Activated T-helper 1 cell treated with anti-CD3 and anti-CD28 coated beads, Interleukin-12 subunit alpha, Interleukin-12 subunit beta, Interleukin-2, Interleukin-4 antibody, amounts not matched to agents 30 ng/mL and 10 ng/mL and 1 ng/mL, durations not matched to agents 14 hours and 24 hours and 36 hours (primary cell): ENCODE measurements at regions of chr9 and their contacts with region 1.

Region 1: DNA sequence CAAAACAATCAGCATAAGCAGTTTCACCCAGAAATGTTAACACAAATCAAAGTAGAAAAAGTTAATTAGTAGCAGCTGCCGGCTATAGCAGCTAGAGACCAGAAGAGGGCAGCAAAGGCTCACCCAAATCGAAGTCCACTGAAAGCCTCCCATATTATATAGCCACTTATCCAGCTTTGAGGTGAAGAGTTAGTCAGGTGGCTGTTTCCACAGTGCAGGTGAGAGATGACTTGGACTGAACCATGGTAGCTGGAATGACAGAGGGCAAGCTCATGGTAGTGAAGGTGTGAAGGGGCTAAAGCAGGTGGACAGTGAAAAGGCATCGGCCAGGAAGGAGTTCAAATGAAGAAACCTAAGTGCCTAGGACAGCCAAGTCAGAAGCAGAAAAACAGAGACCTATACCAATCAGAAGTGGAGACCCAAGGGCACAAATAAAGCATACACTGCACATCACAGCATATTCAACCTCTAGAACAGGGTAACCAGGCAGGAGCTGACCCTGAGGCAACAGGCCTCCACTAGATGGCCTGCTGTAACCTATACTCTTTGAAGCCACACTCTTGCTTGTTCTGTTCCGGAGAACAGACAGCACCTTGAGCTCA is 7.2 kb upstream of the RNF38 start:
- DNase-seq: peak; percentile 49
- H3K4me3 Mint-ChIP-seq: no peak overlapping the region
- H3K27ac Mint-ChIP-seq: peak overlapping the region; percentile 62
- H3K4me1 Mint-ChIP-seq: peaks cover 13% of the 10 kb centered on the region
- H3K27me3 Mint-ChIP-seq: no peaks in the 10 kb centered on the region

Region 2: GRCh38 chr9:36450110-36450732 is 43.0 kb after region 1 on chr9:
- intact Hi-C with region 1: loop called (anchors 1 kb)
- DNase-seq: no peak
- H3K4me3 Mint-ChIP-seq: no peak overlapping the region
- H3K27ac Mint-ChIP-seq: no peak overlapping the region
- H3K4me1 Mint-ChIP-seq: no peaks in the 10 kb centered on the region
- H3K27me3 Mint-ChIP-seq: no peaks in the 10 kb centered on the region

Region 3: DNA sequence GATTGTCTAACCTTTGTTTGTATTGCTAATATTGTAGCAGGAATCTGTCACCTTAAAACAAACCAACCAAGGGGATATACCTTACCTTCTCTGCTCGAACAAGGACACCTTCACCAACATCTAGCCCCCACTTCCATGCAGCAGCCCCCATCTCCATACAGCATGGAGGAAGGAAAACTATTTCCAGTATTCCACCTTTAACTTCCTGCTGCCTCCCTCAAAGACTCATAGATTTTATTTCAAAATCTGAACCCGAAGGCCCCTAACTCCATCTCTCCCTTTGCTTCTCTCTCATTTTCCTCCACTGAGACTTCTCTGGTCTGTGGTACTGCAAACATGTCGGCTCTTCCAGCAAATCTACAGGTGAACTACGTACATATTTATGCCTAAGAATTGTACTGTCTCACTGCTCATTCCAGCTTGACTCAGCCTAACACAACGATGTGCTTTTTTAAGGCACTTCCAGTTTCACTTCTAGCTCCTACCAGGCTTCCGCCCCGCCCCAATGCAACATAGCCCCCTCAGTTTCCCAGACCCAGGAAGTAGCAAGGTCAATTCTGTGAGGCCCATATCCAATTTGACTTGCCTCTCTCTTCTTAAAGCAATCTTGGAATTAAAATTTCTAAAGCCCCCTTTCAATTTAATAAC is 63.5 kb after region 1 on chr9:
- intact Hi-C with region 1: loop called (anchors 5 kb)
- DNase-seq: peak; percentile 54
- H3K4me3 Mint-ChIP-seq: peak overlapping the region; percentile 80
- H3K27ac Mint-ChIP-seq: peak overlapping the region; percentile 86
- H3K4me1 Mint-ChIP-seq: peaks cover 29% of the 10 kb centered on the region
- H3K27me3 Mint-ChIP-seq: no peaks in the 10 kb centered on the region

Region 4: GRCh38 chr9:36560857-36561221 is 153.6 kb after region 1 on chr9:
- intact Hi-C with region 1: loop called (anchors 1 kb)
- DNase-seq: no peak
- H3K4me3 Mint-ChIP-seq: no peak overlapping the region
- H3K27ac Mint-ChIP-seq: no peak overlapping the region
- H3K4me1 Mint-ChIP-seq: no peaks in the 10 kb centered on the region
- H3K27me3 Mint-ChIP-seq: no peaks in the 10 kb centered on the region

Region 5: GRCh38 chr9:36632892-36633291 is 225.7 kb after region 1 on chr9:
- intact Hi-C with region 1: loop called (anchors 1 kb)
- DNase-seq: no peak
- H3K4me3 Mint-ChIP-seq: no peak overlapping the region
- H3K27ac Mint-ChIP-seq: no peak overlapping the region
- H3K4me1 Mint-ChIP-seq: no peaks in the 10 kb centered on the region
- H3K27me3 Mint-ChIP-seq: no peaks in the 10 kb centered on the region

Region 6: DNA sequence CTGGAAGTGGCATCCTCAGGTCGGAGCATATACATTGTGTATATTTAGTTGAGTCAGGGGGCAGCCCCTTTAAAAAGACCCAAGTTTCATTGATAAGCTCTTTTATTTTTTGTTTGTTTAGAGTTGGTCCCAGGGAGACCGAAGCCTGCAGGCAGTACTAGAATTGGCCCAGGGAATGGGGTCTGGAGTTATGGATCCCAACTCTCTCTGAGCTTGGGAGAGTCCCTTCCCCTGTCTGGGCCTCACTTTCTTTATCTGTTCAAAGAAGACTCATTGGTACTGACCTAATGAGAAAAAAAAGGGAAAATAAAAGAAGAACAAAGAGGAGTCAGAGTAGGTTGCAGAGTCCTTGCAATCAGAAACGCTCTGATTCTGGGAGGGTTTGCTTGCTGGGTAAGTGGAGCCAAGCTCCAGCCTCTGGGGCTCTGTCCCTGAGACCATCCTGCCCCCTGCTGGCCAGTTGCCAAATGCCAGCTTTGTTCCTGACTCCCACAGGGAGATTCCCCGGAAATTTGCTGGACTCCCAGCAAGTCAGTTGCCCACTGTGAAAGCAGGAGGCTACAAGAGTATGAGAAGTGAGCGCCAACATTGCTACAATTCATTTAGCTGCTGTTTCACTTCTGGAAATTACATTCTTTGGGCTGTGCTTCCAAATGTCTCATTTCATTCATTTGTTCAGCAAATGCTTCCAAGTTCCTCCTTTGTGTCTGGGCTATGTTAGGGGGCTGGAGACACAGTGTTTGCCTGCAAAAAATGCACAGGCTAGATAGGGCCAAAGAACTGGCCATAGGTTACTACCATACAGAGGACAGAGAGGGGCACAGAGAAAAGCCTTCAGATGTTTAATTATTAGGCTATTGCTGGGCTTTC is 321.7 kb after region 1 on chr9:
- intact Hi-C with region 1: loop called (anchors 1 kb)
- DNase-seq: peak; percentile 37
- H3K4me3 Mint-ChIP-seq: no peak overlapping the region
- H3K27ac Mint-ChIP-seq: no peak overlapping the region
- H3K4me1 Mint-ChIP-seq: no peaks in the 10 kb centered on the region
- H3K27me3 Mint-ChIP-seq: no peaks in the 10 kb centered on the region